ENCODE measurements at regions of chr22 and their contacts with region 1.

Region 1: DNA sequence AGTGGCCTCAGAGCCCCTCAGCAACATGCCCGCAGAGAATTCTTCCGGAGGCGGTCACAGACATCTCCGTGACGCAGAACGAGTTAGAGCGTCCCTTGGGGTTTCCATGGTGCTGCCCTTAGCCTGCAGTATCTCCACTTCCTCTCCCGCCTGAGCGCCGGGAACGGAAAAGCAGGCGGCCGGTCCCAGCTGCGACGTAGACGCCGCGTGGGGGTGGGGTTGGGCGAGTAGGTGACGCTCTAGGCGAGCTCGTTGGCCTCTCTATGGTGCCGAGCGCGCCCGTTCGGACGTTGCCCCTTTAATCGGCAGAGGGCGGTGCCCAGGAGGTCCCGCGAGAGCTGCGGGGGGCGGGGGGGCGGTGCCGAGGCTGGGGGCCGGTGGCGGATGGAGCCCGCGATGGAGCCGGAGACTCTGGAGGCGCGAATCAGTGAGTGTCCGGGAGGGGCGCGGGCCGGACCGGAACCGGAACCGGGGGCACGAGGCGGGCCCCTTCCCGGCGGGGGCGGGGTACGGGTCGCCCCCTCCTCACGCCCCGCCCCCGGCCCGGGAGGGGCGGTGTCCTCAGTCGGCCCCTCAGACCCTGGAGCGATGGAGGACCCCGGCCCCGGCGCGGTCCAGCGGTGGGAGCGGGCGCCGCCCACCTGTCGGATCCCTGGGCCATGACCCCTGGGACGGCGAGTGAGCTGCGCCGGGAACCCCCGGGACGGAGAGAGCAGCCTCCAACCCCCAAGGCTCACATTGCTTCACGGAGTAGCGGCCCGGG is at the start of gene GGA1:
- DNase-seq: peak; percentile 96
- H3K4me3 Mint-ChIP-seq: peak within 1 kb of the TSS; percentile 96
- H3K27ac Mint-ChIP-seq: peak within 1 kb of the TSS; percentile 98
- H3K4me1 Mint-ChIP-seq: peaks cover 45% of the 10 kb centered on the region
- H3K27me3 Mint-ChIP-seq: peaks cover 1% of the 10 kb centered on the region
- total RNA-seq, gene GGA1: 70.8 and 78.9 TPM in 2 replicates

Region 2: DNA sequence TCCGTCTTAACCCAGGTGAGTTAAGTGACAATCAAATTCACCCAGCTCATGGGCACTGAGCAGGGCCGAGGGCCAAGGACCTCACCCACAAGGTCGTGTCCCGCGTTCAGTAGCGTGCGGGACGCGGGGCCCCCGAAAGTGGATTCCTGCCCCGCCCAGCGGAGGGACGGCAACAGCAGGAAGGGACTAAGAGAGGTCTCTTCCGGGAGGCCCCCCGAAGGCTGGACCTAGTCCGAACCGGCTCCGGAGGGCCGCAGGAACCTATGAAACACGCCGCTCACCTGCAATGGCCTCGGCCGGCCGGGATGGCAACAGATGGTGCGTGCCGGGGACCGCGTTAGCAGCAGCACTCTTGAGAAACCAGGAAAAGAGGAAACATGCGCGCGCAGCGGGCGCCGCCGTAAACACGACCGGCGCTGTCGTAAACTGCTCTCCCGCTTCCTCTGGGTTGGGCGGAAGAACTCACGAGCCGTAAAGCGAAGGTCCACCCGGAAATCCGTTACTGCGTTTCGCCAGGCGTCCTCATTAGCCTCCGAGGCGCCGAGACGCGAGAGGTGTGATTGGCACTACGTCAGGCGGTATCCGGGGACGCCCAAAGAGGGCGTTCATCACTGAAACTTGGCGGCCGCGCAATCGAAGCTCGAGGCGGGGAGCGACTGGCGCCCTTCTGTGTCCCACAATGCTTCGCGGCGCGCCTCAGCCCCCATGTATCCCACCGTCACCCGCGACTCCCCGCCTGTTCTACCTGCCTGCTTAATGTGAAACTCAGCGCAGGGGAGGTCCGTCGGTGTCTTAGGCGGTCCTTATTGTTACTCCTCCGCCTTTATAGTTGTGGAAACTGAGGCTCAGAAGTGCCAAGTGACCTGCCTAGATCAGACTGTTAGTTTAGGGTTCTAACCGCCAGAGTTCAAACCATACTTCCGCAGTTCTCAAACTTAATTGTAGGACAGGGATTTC is 1079.6 kb before region 1 on chr22 and contains the start of gene EIF3D:
- intact Hi-C with region 1: loop called (anchors 2 kb)
- DNase-seq: peak; percentile 99
- H3K4me3 Mint-ChIP-seq: peak within 1 kb of the TSS; percentile 96
- H3K27ac Mint-ChIP-seq: peak within 1 kb of the TSS; percentile 99
- H3K4me1 Mint-ChIP-seq: peaks cover 24% of the 10 kb centered on the region
- H3K27me3 Mint-ChIP-seq: peaks cover 2% of the 10 kb centered on the region
- total RNA-seq, gene EIF3D: 322 and 323 TPM in 2 replicates

Region 3: DNA sequence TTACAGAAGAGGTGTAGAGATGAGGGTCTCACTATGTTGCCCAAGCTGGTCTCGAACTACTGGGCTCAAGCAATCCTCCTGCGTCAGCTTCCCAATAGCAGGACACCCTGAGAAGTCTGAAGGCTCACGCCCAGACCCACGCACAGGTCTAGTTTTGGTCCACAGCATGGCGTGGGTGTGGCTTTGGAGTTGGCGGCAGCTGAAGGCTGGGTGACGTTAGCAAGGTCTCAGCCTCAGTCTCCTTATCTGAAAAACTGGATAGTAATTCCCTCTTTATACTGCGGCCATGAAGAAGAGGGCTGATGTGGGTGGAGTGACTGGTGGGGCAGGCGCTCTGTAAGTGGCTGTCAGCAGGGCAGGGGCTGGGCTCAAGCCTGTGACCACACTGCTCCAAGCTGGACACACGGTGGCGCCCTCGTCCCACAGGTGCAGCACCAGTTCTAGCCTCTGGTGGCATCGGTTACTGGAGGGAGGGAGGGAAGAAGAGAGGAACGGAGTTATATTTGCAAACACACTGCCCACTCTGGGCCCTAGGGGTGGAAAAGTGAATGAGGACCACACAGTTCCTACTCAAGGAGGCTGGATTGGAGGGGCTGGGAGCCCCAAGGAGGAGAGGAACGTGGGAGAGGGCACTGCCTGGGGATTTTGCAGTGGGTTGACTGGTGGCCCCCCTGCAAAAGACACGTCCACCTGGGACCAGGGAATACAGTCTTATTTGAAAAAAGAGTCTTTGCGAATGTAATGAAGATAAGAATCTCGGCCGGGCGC is 69.9 kb before region 1 on chr22:
- intact Hi-C with region 1: loop called (anchors 1 kb)
- DNase-seq: peak; percentile 83
- H3K4me3 Mint-ChIP-seq: peak overlapping the region; percentile 41
- H3K27ac Mint-ChIP-seq: peak overlapping the region; percentile 50
- H3K4me1 Mint-ChIP-seq: peaks cover 40% of the 10 kb centered on the region
- H3K27me3 Mint-ChIP-seq: peaks cover 13% of the 10 kb centered on the region

Region 4: GRCh38 chr22:37658133-37659065 is 49.7 kb after region 1 on chr22 and contains the start of gene PDXP:
- intact Hi-C with region 1: loop called (anchors 1 kb)
- DNase-seq: peak; percentile 99
- H3K4me3 Mint-ChIP-seq: peak within 1 kb of the TSS; percentile 89
- H3K27ac Mint-ChIP-seq: peak within 1 kb of the TSS; percentile 91
- H3K4me1 Mint-ChIP-seq: peaks cover 43% of the 10 kb centered on the region
- H3K27me3 Mint-ChIP-seq: no peaks in the 10 kb centered on the region
- total RNA-seq, gene PDXP: 47.0 and 50.4 TPM in 2 replicates

Region 5: GRCh38 chr22:37745548-37746365 is 137.1 kb after region 1 on chr22:
- intact Hi-C with region 1: loop called (anchors 2 kb)
- DNase-seq: peak; percentile 85
- H3K4me3 Mint-ChIP-seq: peak overlapping the region; percentile 83
- H3K27ac Mint-ChIP-seq: peak overlapping the region; percentile 74
- H3K4me1 Mint-ChIP-seq: peaks cover 25% of the 10 kb centered on the region
- H3K27me3 Mint-ChIP-seq: no peaks in the 10 kb centered on the region

Region 6: GRCh38 chr22:38201710-38202436 is 593.2 kb after region 1 on chr22 and contains the start of gene MAFF:
- intact Hi-C with region 1: loop called (anchors 5 kb)
- DNase-seq: peak; percentile 80
- H3K4me3 Mint-ChIP-seq: peak within 1 kb of the TSS; percentile 89
- H3K27ac Mint-ChIP-seq: peak within 1 kb of the TSS; percentile 82
- H3K4me1 Mint-ChIP-seq: peaks cover 42% of the 10 kb centered on the region
- H3K27me3 Mint-ChIP-seq: peaks cover 3% of the 10 kb centered on the region
- total RNA-seq, gene MAFF: 12.3 and 12.5 TPM in 2 replicates